ENCODE measurements at regions of chr10 and their contacts with region 1.

Region 1: GRCh38 chr10:131885391-131886161 is 15.2 kb upstream of the PPP2R2D start:
- DNase-seq: peak; percentile 69 to 90 (median 82)
- ATAC-seq: peak; percentile 100
- H3K4me3 ChIP-seq: no peak overlapping the region
- H3K4me3 Mint-ChIP-seq: no peak overlapping the region
- H3K27ac ChIP-seq: no peak overlapping the region
- H3K27ac Mint-ChIP-seq: no peak overlapping the region
- H3K4me1 ChIP-seq: peaks cover 13% of the 10 kb centered on the region
- H3K4me1 Mint-ChIP-seq: peaks cover 12% of the 10 kb centered on the region
- H3K27me3 ChIP-seq: peaks cover 0 to 3% of the 10 kb centered on the region in 2 experiments
- H3K27me3 Mint-ChIP-seq: peaks cover 9% of the 10 kb centered on the region
- CTCF ChIP-seq: peak; percentile 96

Region 2: GRCh38 chr10:131033166-131034085 is 852.1 kb before region 1 on chr10:
- CTCF ChIA-PET with region 1: no interaction called
- POLR2A ChIA-PET with region 1: no interaction called
- intact Hi-C with region 1: no loop called
- DNase-seq: no peak
- ATAC-seq: no peak
- H3K4me3 ChIP-seq: no peak overlapping the region
- H3K4me3 Mint-ChIP-seq: no peak overlapping the region
- H3K27ac ChIP-seq: no peak overlapping the region
- H3K27ac Mint-ChIP-seq: no peak overlapping the region
- H3K4me1 ChIP-seq: no peaks in the 10 kb centered on the region
- H3K4me1 Mint-ChIP-seq: no peaks in the 10 kb centered on the region
- H3K27me3 ChIP-seq: no peaks in the 10 kb centered on the region
- H3K27me3 Mint-ChIP-seq: no peaks in the 10 kb centered on the region
- CTCF ChIP-seq: no peak

Region 3: GRCh38 chr10:131641231-131641630 is 244.3 kb before region 1 on chr10:
- CTCF ChIA-PET with region 1: no interaction called
- POLR2A ChIA-PET with region 1: no interaction called
- intact Hi-C with region 1: no loop called
- DNase-seq: no peak
- ATAC-seq: no peak
- H3K4me3 ChIP-seq: no peak overlapping the region
- H3K4me3 Mint-ChIP-seq: no peak overlapping the region
- H3K27ac ChIP-seq: no peak overlapping the region
- H3K27ac Mint-ChIP-seq: no peak overlapping the region
- H3K4me1 ChIP-seq: no peaks in the 10 kb centered on the region
- H3K4me1 Mint-ChIP-seq: no peaks in the 10 kb centered on the region
- H3K27me3 ChIP-seq: peaks cover 0 to 4% of the 10 kb centered on the region in 2 experiments
- H3K27me3 Mint-ChIP-seq: no peaks in the 10 kb centered on the region
- CTCF ChIP-seq: no peak

Region 4: GRCh38 chr10:132023092-132023811 is 137.7 kb after region 1 on chr10:
- CTCF ChIA-PET with region 1: interaction called, 27 read pairs
- POLR2A ChIA-PET with region 1: interaction called, 8 read pairs
- intact Hi-C with region 1: loop called (anchors 1 kb)
- DNase-seq: peak; percentile 58 to 88 (median 75)
- ATAC-seq: peak; percentile 88
- H3K4me3 ChIP-seq: no peak overlapping the region
- H3K4me3 Mint-ChIP-seq: no peak overlapping the region
- H3K27ac ChIP-seq: no peak overlapping the region
- H3K27ac Mint-ChIP-seq: no peak overlapping the region
- H3K4me1 ChIP-seq: peaks cover 9% of the 10 kb centered on the region
- H3K4me1 Mint-ChIP-seq: peaks cover 6% of the 10 kb centered on the region
- H3K27me3 ChIP-seq: peaks cover 0 to 24% of the 10 kb centered on the region in 2 experiments
- H3K27me3 Mint-ChIP-seq: peaks cover 45% of the 10 kb centered on the region
- CTCF ChIP-seq: peak; percentile 92

Region 5: GRCh38 chr10:132142411-132143161 is 257.0 kb after region 1 on chr10:
- CTCF ChIA-PET with region 1: no interaction called
- POLR2A ChIA-PET with region 1: no interaction called
- intact Hi-C with region 1: loop called in 1 of 2 experiments (anchors 1 kb)
- DNase-seq: peak; percentile 18 to 65 (median 41)
- ATAC-seq: peak; percentile 86
- H3K4me3 ChIP-seq: no peak overlapping the region
- H3K4me3 Mint-ChIP-seq: no peak overlapping the region
- H3K27ac ChIP-seq: no peak overlapping the region
- H3K27ac Mint-ChIP-seq: no peak overlapping the region
- H3K4me1 ChIP-seq: peaks cover 12% of the 10 kb centered on the region
- H3K4me1 Mint-ChIP-seq: no peaks in the 10 kb centered on the region
- H3K27me3 ChIP-seq: peaks cover 3 to 7% of the 10 kb centered on the region in 2 experiments
- H3K27me3 Mint-ChIP-seq: peaks cover 6% of the 10 kb centered on the region
- CTCF ChIP-seq: peak; percentile 77

Measured in CD4-positive, alpha-beta T cell (primary cell).